ENCODE measurements at regions of chr9 and their contacts with region 1.

Region 1: GRCh38 chr9:5186416-5187169 is 1.2 kb upstream of the INSL6 start:
- DNase-seq: peak; percentile 76
- ATAC-seq: peak; percentile 79
- H3K4me3 Mint-ChIP-seq: no peak overlapping the region
- H3K27ac Mint-ChIP-seq: no peak overlapping the region
- H3K4me1 Mint-ChIP-seq: peaks cover 25% of the 10 kb centered on the region
- H3K27me3 Mint-ChIP-seq: no peaks in the 10 kb centered on the region
- CTCF ChIP-seq: peak; percentile 87

Region 2: GRCh38 chr9:4750023-4750673 is 436.4 kb before region 1 on chr9:
- CTCF ChIA-PET with region 1: interaction called, 8 read pairs
- POLR2A ChIA-PET with region 1: no interaction called
- intact Hi-C with region 1: loop called (anchors 10 kb)
- DNase-seq: no peak
- ATAC-seq: peak; percentile 61
- H3K4me3 Mint-ChIP-seq: no peak overlapping the region
- H3K27ac Mint-ChIP-seq: no peak overlapping the region
- H3K4me1 Mint-ChIP-seq: peaks cover 19% of the 10 kb centered on the region
- H3K27me3 Mint-ChIP-seq: no peaks in the 10 kb centered on the region
- CTCF ChIP-seq: peak; percentile 47

Region 3: DNA sequence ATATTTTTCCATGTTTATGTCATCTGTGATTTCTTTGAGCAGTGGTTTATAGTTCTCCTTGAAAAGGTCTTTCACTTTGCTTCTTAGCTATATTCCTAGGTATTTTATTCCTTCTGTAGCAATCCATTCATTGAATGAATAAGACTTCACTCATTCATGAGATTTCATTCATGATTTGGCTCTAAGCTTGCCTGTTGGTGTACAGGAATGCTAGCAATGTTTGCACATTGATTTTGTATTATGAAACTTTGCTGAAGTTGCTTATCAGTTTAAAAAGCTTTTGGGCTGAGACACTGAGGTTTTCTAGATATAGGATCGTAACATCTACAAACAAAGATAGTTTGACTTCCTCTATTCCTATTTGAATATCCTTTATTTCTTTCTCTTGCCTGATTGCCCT is 102.0 kb after region 1 on chr9:
- CTCF ChIA-PET with region 1: no interaction called
- POLR2A ChIA-PET with region 1: no interaction called
- intact Hi-C with region 1: no loop called
- DNase-seq: no peak
- ATAC-seq: no peak
- H3K4me3 Mint-ChIP-seq: no peak overlapping the region
- H3K27ac Mint-ChIP-seq: no peak overlapping the region
- H3K4me1 Mint-ChIP-seq: peaks cover 5% of the 10 kb centered on the region
- H3K27me3 Mint-ChIP-seq: no peaks in the 10 kb centered on the region
- CTCF ChIP-seq: no peak

Region 4: GRCh38 chr9:5416962-5417361 is 230.4 kb after region 1 on chr9:
- CTCF ChIA-PET with region 1: interaction called, 10 read pairs
- POLR2A ChIA-PET with region 1: no interaction called
- intact Hi-C with region 1: no loop called
- DNase-seq: no peak
- ATAC-seq: no peak
- H3K4me3 Mint-ChIP-seq: no peak overlapping the region
- H3K27ac Mint-ChIP-seq: no peak overlapping the region
- H3K4me1 Mint-ChIP-seq: peaks cover 13% of the 10 kb centered on the region
- H3K27me3 Mint-ChIP-seq: no peaks in the 10 kb centered on the region
- CTCF ChIP-seq: no peak

Region 5: DNA sequence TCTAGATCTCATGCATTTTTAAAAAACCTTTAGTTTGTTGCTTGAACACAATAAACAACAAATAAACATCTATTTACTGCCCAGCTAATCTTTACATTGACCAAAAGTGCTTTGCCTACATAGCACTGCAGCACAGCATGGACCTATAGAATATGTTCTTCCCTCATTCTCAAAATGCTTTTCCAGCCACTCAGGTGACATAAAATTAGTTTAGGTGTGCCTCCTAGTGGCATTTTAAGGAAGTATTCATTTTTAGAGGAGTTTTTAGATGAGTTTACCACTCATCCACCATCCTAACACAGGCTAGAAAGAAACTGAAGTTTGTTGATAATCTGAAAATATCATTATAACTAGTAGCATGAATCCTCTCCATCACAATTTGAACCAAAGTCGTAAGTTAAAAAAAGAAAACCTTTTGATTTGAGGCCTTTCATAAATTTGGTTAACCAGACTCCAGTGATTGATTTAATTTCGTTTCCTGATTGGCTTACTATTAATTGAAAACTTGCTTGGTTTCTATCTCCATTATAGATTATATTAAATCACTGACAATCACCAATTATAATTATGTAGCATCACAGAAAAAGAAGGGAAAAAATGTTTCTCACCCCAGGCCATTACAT is 238.5 kb after region 1 on chr9:
- CTCF ChIA-PET with region 1: interaction called, 41 read pairs
- POLR2A ChIA-PET with region 1: no interaction called
- intact Hi-C with region 1: loop called (anchors 1 kb)
- DNase-seq: no peak
- ATAC-seq: peak; percentile 73
- H3K4me3 Mint-ChIP-seq: no peak overlapping the region
- H3K27ac Mint-ChIP-seq: no peak overlapping the region
- H3K4me1 Mint-ChIP-seq: peaks cover 9% of the 10 kb centered on the region
- H3K27me3 Mint-ChIP-seq: no peaks in the 10 kb centered on the region
- CTCF ChIP-seq: peak; percentile 80

Region 6: DNA sequence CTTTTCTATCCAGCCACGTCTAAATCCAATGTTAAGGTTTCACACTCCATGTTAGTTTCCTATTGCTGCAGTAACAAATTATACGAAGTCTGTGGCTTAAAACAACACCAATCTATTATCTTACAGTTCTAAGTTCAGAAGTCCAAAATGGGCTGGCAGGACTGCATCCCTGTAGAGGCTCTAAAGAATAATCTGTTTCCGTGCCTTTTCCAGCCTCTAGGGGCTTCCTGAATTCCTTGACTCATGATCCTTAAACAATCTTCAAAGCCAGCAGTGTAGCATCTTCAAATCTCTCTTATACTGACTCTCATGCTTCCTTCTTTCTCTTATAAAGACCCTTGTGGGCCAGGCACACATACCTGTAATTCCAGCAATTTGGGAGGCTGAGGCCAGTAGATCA is 244.3 kb after region 1 on chr9:
- CTCF ChIA-PET with region 1: interaction called, 41 read pairs
- POLR2A ChIA-PET with region 1: no interaction called
- intact Hi-C with region 1: no loop called
- DNase-seq: no peak
- ATAC-seq: no peak
- H3K4me3 Mint-ChIP-seq: no peak overlapping the region
- H3K27ac Mint-ChIP-seq: no peak overlapping the region
- H3K4me1 Mint-ChIP-seq: peaks cover 6% of the 10 kb centered on the region
- H3K27me3 Mint-ChIP-seq: no peaks in the 10 kb centered on the region
- CTCF ChIP-seq: no peak

Region 7: DNA sequence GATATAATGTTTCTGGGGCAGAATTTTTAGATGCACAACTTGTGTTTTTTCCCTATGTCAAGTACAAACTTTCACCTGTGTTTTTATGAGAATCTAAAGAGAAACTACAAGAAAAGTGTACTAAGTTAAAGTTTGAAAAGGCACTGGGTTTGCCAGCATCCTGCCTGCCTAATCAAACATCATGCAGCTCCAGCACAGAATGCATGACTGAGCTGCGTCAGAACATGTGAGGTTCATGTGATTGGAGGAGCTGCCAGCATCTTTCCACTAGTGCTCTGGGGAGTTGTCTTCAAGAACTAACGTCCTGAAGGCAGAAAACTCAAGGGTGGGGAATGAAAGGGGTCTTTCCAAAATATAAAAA is 396.2 kb after region 1 on chr9:
- CTCF ChIA-PET with region 1: interaction called, 10 read pairs
- POLR2A ChIA-PET with region 1: no interaction called
- intact Hi-C with region 1: no loop called
- DNase-seq: peak; percentile 67
- ATAC-seq: peak; percentile 62
- H3K4me3 Mint-ChIP-seq: no peak overlapping the region
- H3K27ac Mint-ChIP-seq: peak overlapping the region; percentile 82
- H3K4me1 Mint-ChIP-seq: peaks cover 50% of the 10 kb centered on the region
- H3K27me3 Mint-ChIP-seq: no peaks in the 10 kb centered on the region
- CTCF ChIP-seq: no peak

Region 8: DNA sequence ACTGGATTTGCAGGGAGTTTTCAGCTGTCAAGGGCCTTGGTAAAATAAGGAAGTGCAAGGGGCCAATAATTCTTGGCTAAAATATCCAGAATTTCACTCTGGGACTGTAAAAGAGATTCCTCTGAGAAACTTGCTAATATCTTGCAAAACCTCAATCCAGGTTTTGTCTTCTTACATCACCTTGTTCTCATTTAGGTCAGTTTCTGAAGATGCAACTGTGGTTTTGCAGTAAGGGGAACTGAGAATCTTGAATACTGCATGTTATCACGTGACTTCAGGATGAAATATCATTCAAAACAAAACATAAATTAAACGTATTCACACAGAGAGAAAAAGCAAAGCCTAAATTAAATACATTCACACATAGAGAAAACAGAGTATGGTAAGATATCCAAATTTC is 407.3 kb after region 1 on chr9:
- CTCF ChIA-PET with region 1: interaction called, 25 read pairs
- POLR2A ChIA-PET with region 1: no interaction called
- intact Hi-C with region 1: loop called (anchors 2 kb)
- DNase-seq: no peak
- ATAC-seq: no peak
- H3K4me3 Mint-ChIP-seq: no peak overlapping the region
- H3K27ac Mint-ChIP-seq: no peak overlapping the region
- H3K4me1 Mint-ChIP-seq: peaks cover 26% of the 10 kb centered on the region
- H3K27me3 Mint-ChIP-seq: no peaks in the 10 kb centered on the region
- CTCF ChIP-seq: no peak